ENCODE measurements at regions of chr12 and their contacts with region 1.

Region 1: DNA sequence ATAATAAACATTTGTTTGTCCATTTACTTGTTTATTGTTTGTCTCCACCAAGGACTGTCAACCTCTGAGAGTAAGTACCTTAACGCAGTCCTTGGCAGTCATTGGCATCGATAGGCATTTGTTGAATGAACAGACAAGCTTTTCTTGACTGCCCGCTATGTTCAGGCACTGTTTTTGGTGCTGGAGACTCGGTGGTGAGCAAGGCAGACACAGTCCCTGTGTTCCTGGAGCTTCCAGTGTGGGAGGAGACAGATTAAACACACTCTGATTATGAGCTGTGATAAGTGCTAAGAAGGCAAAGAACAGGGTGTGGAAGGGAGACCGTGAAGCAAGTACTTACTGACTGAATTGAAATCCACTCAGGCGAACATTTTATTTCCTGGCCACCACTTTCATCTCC is 1.2 kb downstream of the ATP6V0A2 start:
- DNase-seq: peak in 2 of 9 donors; percentile 7 to 41
- ATAC-seq: no peak
- H3K4me3 ChIP-seq: peak overlapping the region; percentile 95
- H3K4me3 Mint-ChIP-seq: peak overlapping the region; percentile 81 to 100 (median 90)
- H3K27ac ChIP-seq: peak overlapping the region; percentile 77
- H3K27ac Mint-ChIP-seq: peak overlapping the region; percentile 37 to 93 (median 79)
- H3K4me1 ChIP-seq: peaks cover 11 to 21% of the 10 kb centered on the region in 2 donors
- H3K4me1 Mint-ChIP-seq: peaks cover 28 to 42% (median 38%) of the 10 kb centered on the region in 7 donors
- H3K27me3 ChIP-seq: no peaks in the 10 kb centered on the region
- H3K27me3 Mint-ChIP-seq: no peaks in the 10 kb centered on the region

Region 2: DNA sequence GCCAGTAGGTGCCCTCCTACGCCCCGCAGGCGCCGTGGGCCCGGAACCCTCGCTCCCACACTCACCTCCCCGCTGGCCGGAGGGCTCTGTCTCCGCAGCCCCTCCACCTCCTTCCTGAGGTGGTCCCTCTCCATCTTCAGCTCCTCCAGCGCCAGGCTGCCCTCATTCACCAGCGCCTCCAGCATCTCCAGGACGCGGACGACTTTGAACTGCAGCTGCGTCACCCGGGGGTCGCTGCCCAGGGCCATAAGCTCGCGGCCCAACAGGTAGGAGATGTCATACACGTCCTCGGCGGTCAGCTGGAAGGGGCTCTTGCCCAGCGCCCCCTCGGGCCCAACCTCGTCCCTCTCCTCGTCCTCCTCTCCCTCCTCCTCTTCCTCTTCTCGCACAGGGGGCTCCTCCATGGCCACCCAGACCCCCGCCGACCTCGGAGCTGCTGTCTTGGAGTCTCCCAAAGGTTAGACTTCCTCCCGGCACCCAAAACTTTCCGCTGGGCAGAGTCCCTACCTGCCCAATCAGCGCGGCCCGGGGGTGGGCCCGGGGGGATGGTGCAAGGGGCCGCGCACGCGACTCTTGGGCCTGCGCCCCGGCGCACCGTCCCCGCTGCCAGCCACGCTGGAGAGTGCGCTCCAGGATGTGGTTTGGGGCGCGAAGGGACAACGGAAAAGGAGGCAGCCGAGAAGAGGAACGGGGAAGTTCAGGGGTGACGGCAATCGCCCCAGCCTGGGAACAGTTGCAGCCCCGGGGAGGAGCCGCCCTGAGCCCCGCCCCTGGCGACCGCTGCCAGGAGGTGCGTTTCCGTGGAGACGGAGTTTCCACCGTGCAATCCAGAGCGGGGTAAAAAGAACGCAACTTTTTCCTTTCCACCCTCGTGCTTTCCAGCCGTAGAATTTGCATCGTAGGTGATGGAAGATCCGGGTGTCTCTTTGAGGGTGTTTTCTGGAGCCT is 277.1 kb before region 1 on chr12 and contains the start of gene RILPL2:
- CTCF ChIA-PET with region 1: no interaction called
- POLR2A ChIA-PET with region 1: no interaction called
- intact Hi-C with region 1: loop called in 1 of 2 experiments (anchors 2 kb)
- DNase-seq: peak; percentile 79 to 96 (median 88)
- ATAC-seq: peak; percentile 91
- H3K4me3 ChIP-seq: peak within 1 kb of the TSS; percentile 96
- H3K4me3 Mint-ChIP-seq: peak within 1 kb of the TSS; percentile 85 to 97 (median 93)
- H3K27ac ChIP-seq: peak within 1 kb of the TSS; percentile 88
- H3K27ac Mint-ChIP-seq: peak within 1 kb of the TSS; percentile 77 to 96 (median 88)
- H3K4me1 ChIP-seq: peaks cover 11 to 29% of the 10 kb centered on the region in 2 donors
- H3K4me1 Mint-ChIP-seq: peaks cover 24 to 47% (median 33%) of the 10 kb centered on the region in 7 donors
- H3K27me3 ChIP-seq: no peaks in the 10 kb centered on the region
- H3K27me3 Mint-ChIP-seq: no peaks in the 10 kb centered on the region
- total RNA-seq, gene RILPL2: 4.3 to 12.8 (median 5.6) TPM

Region 3: DNA sequence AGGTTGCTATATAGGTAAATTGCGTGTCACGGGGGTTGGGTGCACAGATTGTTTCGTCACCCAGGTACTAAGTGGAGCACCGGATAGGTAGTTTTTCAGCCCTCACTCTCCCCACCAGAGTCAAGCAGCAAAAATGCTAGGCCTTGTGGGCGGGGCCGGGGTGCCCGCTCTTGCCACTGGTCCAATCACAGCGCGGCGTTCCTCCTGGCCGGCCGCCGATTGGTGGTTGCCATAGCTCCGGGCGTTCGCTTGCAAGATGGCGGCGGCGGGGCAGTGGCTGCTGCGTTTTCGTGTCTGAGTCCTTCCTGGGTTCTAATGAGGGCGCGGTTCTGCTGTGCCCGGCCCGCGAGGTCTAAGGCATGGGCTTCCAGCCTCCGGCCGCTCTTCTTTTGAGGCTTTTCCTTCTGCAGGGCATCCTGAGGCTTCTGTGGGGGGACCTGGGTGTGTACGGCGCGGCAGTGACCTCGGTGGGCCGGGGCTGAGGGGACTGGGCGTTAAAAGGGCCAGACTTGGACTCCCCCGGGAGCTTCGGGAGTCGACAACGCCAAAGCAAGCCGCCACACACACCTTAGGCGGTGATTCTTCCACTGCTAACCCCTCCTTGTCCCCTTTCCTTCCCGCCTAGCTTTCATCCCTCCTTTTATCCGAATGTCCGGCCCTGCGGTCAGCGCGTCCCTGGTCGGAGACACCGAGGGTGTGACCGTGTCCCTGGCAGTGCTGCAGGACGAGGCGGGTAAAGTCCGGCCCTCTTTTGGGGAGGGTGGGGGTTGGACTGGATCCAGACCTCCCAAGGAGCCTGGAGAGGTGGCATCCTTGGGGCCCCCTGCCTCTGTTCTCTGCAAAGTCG is 42.3 kb before region 1 on chr12 and contains the start of gene TCTN2:
- CTCF ChIA-PET with region 1: interaction called, 4 read pairs
- POLR2A ChIA-PET with region 1: interaction called, 3 read pairs
- intact Hi-C with region 1: loop called (anchors 1 kb)
- DNase-seq: peak; percentile 81 to 93 (median 91)
- ATAC-seq: peak; percentile 100
- H3K4me3 ChIP-seq: peak within 1 kb of the TSS; percentile 75
- H3K4me3 Mint-ChIP-seq: peak within 1 kb of the TSS; percentile 75 to 92 (median 86)
- H3K27ac ChIP-seq: peak within 1 kb of the TSS; percentile 69
- H3K27ac Mint-ChIP-seq: peak within 1 kb of the TSS; percentile 31 to 86 (median 68)
- H3K4me1 ChIP-seq: peaks cover 3 to 10% of the 10 kb centered on the region in 2 donors
- H3K4me1 Mint-ChIP-seq: peaks cover 5 to 19% (median 11%) of the 10 kb centered on the region in 7 donors
- H3K27me3 ChIP-seq: no peaks in the 10 kb centered on the region
- H3K27me3 Mint-ChIP-seq: no peaks in the 10 kb centered on the region
- total RNA-seq, gene TCTN2: 2.5 to 9.1 (median 5.3) TPM

Region 4: DNA sequence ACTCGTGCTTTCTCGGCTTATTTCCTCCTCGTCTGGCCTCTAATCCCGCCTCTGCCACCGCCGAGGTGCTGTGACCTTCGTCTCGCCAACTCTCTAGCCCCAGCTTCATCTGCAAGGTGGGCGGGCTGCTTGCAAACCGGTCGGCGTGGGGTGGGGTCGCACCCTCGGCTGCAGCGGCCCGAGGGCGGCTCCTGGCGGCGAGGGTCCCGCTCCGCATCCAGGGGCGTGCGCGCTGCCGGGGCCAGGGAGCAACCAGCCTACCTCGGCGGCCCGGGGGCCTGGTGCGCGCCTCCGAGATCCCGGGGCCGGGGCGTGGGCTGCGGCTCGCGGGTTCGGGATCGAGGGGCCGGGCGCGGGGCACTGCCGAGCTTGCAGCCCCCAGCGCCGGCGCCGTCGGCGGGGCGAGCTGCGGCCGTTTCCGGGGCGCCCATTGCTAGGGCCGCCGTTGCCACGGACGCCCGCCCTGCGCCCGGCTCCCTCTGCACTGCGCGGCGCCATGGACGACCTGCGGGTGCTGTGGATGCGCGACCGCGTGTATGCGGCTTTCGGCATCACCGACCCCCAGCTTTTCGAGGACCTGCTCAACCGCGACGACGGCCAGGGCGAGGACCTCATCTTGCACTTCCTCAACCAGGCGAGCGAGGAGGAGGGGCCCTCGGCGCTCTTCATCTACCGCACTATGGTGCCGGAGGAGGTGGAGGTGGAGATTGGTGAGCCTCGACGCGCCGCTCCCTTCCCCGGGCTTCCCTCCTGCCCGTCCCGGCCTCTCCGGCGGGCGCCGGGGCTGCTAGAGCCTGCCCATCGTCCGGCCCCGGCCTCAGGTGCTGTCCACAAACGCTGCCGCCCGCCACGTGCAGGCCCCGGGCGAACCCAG is 48.7 kb after region 1 on chr12 and contains the start of gene DNAH10:
- CTCF ChIA-PET with region 1: no interaction called
- POLR2A ChIA-PET with region 1: interaction called, 3 read pairs
- intact Hi-C with region 1: loop called in 1 of 2 experiments (anchors 2 kb)
- DNase-seq: peak; percentile 15 to 57 (median 37)
- ATAC-seq: peak; percentile 81
- H3K4me3 ChIP-seq: peak within 1 kb of the TSS; percentile 52
- H3K4me3 Mint-ChIP-seq: peak within 1 kb of the TSS; percentile 75 to 94 (median 85)
- H3K27ac ChIP-seq: no peak within 1 kb of the TSS
- H3K27ac Mint-ChIP-seq: peak within 1 kb of the TSS in 2 of 9 donors; percentile 18 to 60
- H3K4me1 ChIP-seq: peaks cover 0 to 4% of the 10 kb centered on the region in 2 donors
- H3K4me1 Mint-ChIP-seq: peaks cover 0 to 12% (median 4%) of the 10 kb centered on the region in 7 donors
- H3K27me3 ChIP-seq: no peaks in the 10 kb centered on the region
- H3K27me3 Mint-ChIP-seq: peaks cover 0 to 6% (median 0%) of the 10 kb centered on the region in 5 donors
- total RNA-seq, gene DNAH10: 0.05 to 0.50 (median 0.11) TPM

Region 5: GRCh38 chr12:124036674-124037109 is 323.3 kb after region 1 on chr12:
- CTCF ChIA-PET with region 1: no interaction called
- POLR2A ChIA-PET with region 1: no interaction called
- intact Hi-C with region 1: no loop called
- DNase-seq: peak in 7 of 9 donors; percentile 14 to 57 (median 37)
- ATAC-seq: peak; percentile 72
- H3K4me3 ChIP-seq: no peak overlapping the region
- H3K4me3 Mint-ChIP-seq: no peak overlapping the region
- H3K27ac ChIP-seq: no peak overlapping the region
- H3K27ac Mint-ChIP-seq: no peak overlapping the region
- H3K4me1 ChIP-seq: no peaks in the 10 kb centered on the region
- H3K4me1 Mint-ChIP-seq: no peaks in the 10 kb centered on the region
- H3K27me3 ChIP-seq: no peaks in the 10 kb centered on the region
- H3K27me3 Mint-ChIP-seq: peaks cover 8 to 10% (median 9%) of the 10 kb centered on the region in 5 donors

Region 6: GRCh38 chr12:124057691-124058090 is 344.3 kb after region 1 on chr12:
- CTCF ChIA-PET with region 1: no interaction called
- POLR2A ChIA-PET with region 1: no interaction called
- intact Hi-C with region 1: no loop called
- DNase-seq: no peak
- ATAC-seq: no peak
- H3K4me3 ChIP-seq: no peak overlapping the region
- H3K4me3 Mint-ChIP-seq: no peak overlapping the region
- H3K27ac ChIP-seq: no peak overlapping the region
- H3K27ac Mint-ChIP-seq: no peak overlapping the region
- H3K4me1 ChIP-seq: no peaks in the 10 kb centered on the region
- H3K4me1 Mint-ChIP-seq: no peaks in the 10 kb centered on the region
- H3K27me3 ChIP-seq: no peaks in the 10 kb centered on the region
- H3K27me3 Mint-ChIP-seq: peaks cover 9 to 30% (median 14%) of the 10 kb centered on the region in 5 donors

Measured in naive thymus-derived CD4-positive, alpha-beta T cell (primary cell).